IMR-90 (cell line): ENCODE measurements at regions of chr14 and their contacts with region 1.

Region 1: DNA sequence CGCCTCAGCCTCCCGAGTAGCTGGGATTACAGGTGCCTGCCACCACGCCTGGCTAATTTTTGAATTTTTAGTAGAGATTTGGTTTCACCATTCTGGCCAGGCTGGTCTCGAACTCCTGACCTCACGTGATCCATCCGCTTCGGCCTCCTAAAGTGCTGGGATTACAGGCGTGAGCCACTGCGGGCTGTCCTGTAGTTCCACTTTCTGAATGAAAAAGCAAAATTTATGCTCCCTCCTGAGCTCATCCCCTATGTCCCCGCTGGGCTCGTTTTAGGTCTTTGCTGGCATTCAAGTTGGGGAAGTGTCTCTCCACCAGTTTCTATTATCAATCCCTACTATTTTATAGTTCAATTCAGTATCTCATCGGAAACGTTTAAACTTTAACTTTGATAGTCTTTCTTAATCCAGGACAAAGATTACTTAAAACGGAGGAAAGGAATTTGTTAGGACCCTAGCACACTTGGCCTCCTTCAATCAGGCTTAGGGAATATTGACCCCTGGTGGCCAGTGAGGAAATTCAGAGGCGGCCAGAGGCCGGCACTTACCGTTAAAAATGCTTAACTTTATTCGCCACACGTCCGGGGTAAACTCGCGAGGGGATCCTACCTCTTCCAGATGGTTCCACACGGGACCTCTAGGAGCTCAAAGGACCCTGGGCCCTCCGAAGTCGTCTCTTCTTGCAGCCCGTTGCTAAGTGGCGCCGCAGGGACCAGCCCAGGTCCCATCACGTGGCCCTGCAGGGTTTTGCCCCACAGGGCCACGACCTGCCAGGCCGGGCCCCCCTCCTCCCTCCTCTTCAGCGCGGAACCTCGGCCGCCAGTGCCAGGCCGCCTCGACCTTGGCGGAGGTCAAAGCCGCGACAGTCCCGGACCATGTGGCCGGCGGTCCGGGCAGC is 11.4 kb upstream of the DNAL1 start:
- DNase-seq: peak; percentile 69
- ATAC-seq: peak; percentile 97
- H3K4me3 ChIP-seq: peak overlapping the region; percentile 30
- H3K27ac ChIP-seq: no peak overlapping the region
- H3K4me1 ChIP-seq: no peaks in the 10 kb centered on the region
- H3K27me3 ChIP-seq: no peaks in the 10 kb centered on the region; the same call in 1 of the 2 replicates
- CTCF ChIP-seq: peak; percentile 91
- POLR2A ChIP-seq: no peak
- RAD21 ChIP-seq: peak; percentile 88

Region 2: GRCh38 chr14:72350215-72350614 is 1283.1 kb before region 1 on chr14:
- CTCF ChIA-PET with region 1: no interaction called
- POLR2A ChIA-PET with region 1: no interaction called
- dilution Hi-C with region 1: no loop called
- in situ Hi-C with region 1: no loop called
- intact Hi-C with region 1: no loop called
- DNase-seq: no peak
- ATAC-seq: no peak
- H3K4me3 ChIP-seq: no peak overlapping the region
- H3K27ac ChIP-seq: no peak overlapping the region
- H3K4me1 ChIP-seq: no peaks in the 10 kb centered on the region
- H3K27me3 ChIP-seq: no peaks in the 10 kb centered on the region
- CTCF ChIP-seq: no peak
- POLR2A ChIP-seq: no peak
- RAD21 ChIP-seq: no peak

Region 3: GRCh38 chr14:72962829-72963312 is 670.5 kb before region 1 on chr14:
- CTCF ChIA-PET with region 1: interaction called, 12 read pairs
- POLR2A ChIA-PET with region 1: no interaction called
- dilution Hi-C with region 1: no loop called
- in situ Hi-C with region 1: no loop called
- intact Hi-C with region 1: no loop called
- DNase-seq: peak; percentile 95
- ATAC-seq: peak; percentile 80
- H3K4me3 ChIP-seq: no peak overlapping the region
- H3K27ac ChIP-seq: no peak overlapping the region
- H3K4me1 ChIP-seq: 0 out of 2 replicates have a peak, but pooled peaks cover 5% of the 10 kb centered on the region
- H3K27me3 ChIP-seq: no peaks in the 10 kb centered on the region
- CTCF ChIP-seq: no peak
- POLR2A ChIP-seq: no peak
- RAD21 ChIP-seq: no peak

Region 4: DNA sequence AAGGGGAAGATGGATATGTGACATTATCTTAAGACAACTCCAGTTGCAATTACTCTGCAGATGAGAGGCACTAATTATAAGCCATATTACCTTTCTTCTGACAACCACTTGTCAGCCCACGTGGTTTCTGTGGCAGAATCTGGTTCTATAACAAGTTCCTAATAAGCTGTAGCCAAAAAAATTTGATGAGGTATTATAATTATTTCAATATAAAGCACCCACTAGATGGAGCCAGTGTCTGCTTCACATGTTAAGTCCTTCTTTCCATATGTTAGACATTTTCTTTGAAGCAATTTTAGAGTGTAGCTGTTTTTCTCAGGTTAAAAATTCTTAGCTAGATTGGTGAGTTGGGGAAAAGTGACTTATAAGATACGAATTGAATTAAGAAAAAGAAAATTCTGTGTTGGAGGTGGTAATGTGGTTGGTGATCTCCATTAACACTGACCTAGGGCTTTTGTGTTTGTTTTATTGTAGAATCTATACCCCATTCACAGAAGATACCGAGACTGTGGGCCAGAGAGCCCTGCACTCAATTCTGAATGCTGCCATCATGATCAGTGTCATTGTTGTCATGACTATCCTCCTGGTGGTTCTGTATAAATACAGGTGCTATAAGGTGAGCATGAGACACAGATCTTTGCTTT is 460.1 kb before region 1 on chr14:
- CTCF ChIA-PET with region 1: no interaction called
- POLR2A ChIA-PET with region 1: no interaction called
- dilution Hi-C with region 1: no loop called
- in situ Hi-C with region 1: no loop called
- intact Hi-C with region 1: loop called (anchors 10 kb)
- DNase-seq: peak; percentile 65
- ATAC-seq: peak; percentile 62
- H3K4me3 ChIP-seq: no peak overlapping the region
- H3K27ac ChIP-seq: no peak overlapping the region
- H3K4me1 ChIP-seq: 0 out of 2 replicates have a peak, but pooled peaks cover 2% of the 10 kb centered on the region
- H3K27me3 ChIP-seq: no peaks in the 10 kb centered on the region
- CTCF ChIP-seq: peak; percentile 69
- POLR2A ChIP-seq: no peak
- RAD21 ChIP-seq: peak; percentile 75

Region 5: GRCh38 chr14:73295198-73295796 is 338.1 kb before region 1 on chr14:
- CTCF ChIA-PET with region 1: no interaction called
- POLR2A ChIA-PET with region 1: no interaction called
- dilution Hi-C with region 1: no loop called
- in situ Hi-C with region 1: no loop called
- intact Hi-C with region 1: loop called (anchors 10 kb)
- DNase-seq: peak; percentile 31
- ATAC-seq: no peak
- H3K4me3 ChIP-seq: no peak overlapping the region
- H3K27ac ChIP-seq: no peak overlapping the region
- H3K4me1 ChIP-seq: no peaks in the 10 kb centered on the region
- H3K27me3 ChIP-seq: no peaks in the 10 kb centered on the region
- CTCF ChIP-seq: peak; percentile 69
- POLR2A ChIP-seq: no peak
- RAD21 ChIP-seq: peak; percentile 55

Region 6: GRCh38 chr14:73472185-73473114 is 160.9 kb before region 1 on chr14:
- CTCF ChIA-PET with region 1: no interaction called
- POLR2A ChIA-PET with region 1: no interaction called
- dilution Hi-C with region 1: no loop called
- in situ Hi-C with region 1: no loop called
- intact Hi-C with region 1: loop called (anchors 1 kb)
- DNase-seq: peak; percentile 82
- ATAC-seq: peak; percentile 40
- H3K4me3 ChIP-seq: no peak overlapping the region
- H3K27ac ChIP-seq: no peak overlapping the region
- H3K4me1 ChIP-seq: peaks cover 7% of the 10 kb centered on the region
- H3K27me3 ChIP-seq: no peaks in the 10 kb centered on the region
- CTCF ChIP-seq: peak; percentile 85
- POLR2A ChIP-seq: no peak
- RAD21 ChIP-seq: peak; percentile 95

Region 7: DNA sequence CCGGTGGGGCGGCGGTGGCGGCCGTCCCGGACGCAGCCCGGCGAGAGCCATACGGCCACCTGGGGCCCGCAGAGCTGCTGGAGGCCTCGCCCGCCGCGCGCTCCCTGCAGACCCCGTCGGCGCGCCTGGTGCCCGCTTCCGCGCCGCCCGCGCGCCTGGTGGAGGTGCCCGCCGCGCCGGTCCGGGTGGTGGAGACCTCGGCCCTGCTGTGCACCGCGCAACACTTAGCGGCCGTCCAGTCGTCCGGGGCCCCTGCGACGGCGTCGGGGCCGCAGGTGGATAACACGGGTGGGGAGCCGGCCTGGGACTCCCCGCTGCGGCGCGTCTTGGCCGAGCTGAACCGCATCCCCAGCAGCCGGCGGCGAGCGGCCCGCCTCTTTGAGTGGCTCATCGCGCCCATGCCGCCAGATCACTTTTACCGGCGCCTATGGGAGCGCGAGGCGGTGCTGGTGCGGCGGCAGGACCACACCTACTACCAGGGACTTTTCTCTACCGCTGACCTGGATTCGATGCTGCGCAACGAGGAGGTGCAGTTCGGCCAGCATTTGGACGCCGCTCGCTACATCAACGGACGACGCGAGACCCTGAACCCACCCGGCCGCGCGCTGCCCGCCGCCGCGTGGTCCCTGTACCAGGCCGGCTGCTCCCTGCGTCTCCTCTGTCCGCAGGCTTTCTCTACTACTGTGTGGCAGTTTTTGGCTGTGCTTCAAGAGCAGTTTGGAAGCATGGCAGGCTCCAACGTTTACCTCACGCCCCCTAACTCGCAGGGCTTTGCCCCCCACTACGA is 141.9 kb before region 1 on chr14:
- CTCF ChIA-PET with region 1: interaction called, 4 read pairs
- POLR2A ChIA-PET with region 1: no interaction called
- dilution Hi-C with region 1: no loop called
- in situ Hi-C with region 1: no loop called
- intact Hi-C with region 1: loop called (anchors 5 kb)
- DNase-seq: peak; percentile 64
- ATAC-seq: peak; percentile 70
- H3K4me3 ChIP-seq: peak overlapping the region; percentile 82
- H3K27ac ChIP-seq: peak overlapping the region; percentile 85
- H3K4me1 ChIP-seq: peaks cover 11% of the 10 kb centered on the region
- H3K27me3 ChIP-seq: no peaks in the 10 kb centered on the region
- CTCF ChIP-seq: no peak
- POLR2A ChIP-seq: 0 out of 2 replicates have a peak, but pooled peaks have one; percentile 7
- RAD21 ChIP-seq: no peak

Region 8: GRCh38 chr14:73503648-73504047 is 129.7 kb before region 1 on chr14:
- CTCF ChIA-PET with region 1: interaction called, 12 read pairs
- POLR2A ChIA-PET with region 1: no interaction called
- dilution Hi-C with region 1: no loop called
- in situ Hi-C with region 1: loop called (anchors 5 kb)
- intact Hi-C with region 1: loop called (anchors 1 kb)
- DNase-seq: peak; percentile 76
- ATAC-seq: peak; percentile 72
- H3K4me3 ChIP-seq: no peak overlapping the region
- H3K27ac ChIP-seq: no peak overlapping the region
- H3K4me1 ChIP-seq: no peaks in the 10 kb centered on the region
- H3K27me3 ChIP-seq: no peaks in the 10 kb centered on the region
- CTCF ChIP-seq: no peak
- POLR2A ChIP-seq: no peak
- RAD21 ChIP-seq: no peak

Region 9: GRCh38 chr14:73741386-73741875 is 108.1 kb after region 1 on chr14:
- CTCF ChIA-PET with region 1: no interaction called
- POLR2A ChIA-PET with region 1: no interaction called
- dilution Hi-C with region 1: no loop called
- in situ Hi-C with region 1: no loop called
- intact Hi-C with region 1: no loop called
- DNase-seq: peak; percentile 66
- ATAC-seq: peak; percentile 74
- H3K4me3 ChIP-seq: peak overlapping the region; percentile 13; the same call in 1 of the 2 replicates
- H3K27ac ChIP-seq: peak overlapping the region; percentile 87
- H3K4me1 ChIP-seq: peaks cover 58% of the 10 kb centered on the region
- H3K27me3 ChIP-seq: no peaks in the 10 kb centered on the region
- CTCF ChIP-seq: 0 out of 2 replicates have a peak, but pooled peaks have one; percentile 9
- POLR2A ChIP-seq: no peak
- RAD21 ChIP-seq: no peak; the same call in 1 of the 2 replicates